Uterus (tissue), 4 donors: ENCODE measurements at regions of chr1 and their contacts with region 1.

Region 1: GRCh38 chr1:36285448-36286101 is 20.6 kb upstream of the SH3D21 start:
- DNase-seq: peak; percentile 49 to 80
- H3K4me3 ChIP-seq: no peak overlapping the region
- H3K27ac ChIP-seq: peak overlapping the region in 1 of 2 donors; percentile 19
- H3K4me1 ChIP-seq: no peaks in the 10 kb centered on the region
- H3K27me3 ChIP-seq: no peaks in the 10 kb centered on the region
- CTCF ChIP-seq: peak; percentile 73 to 82 (median 78)
- POLR2A ChIP-seq: no peak

Region 2: GRCh38 chr1:36150296-36151132 is 135.1 kb before region 1 on chr1:
- intact Hi-C with region 1: loop called (anchors 10 kb)
- DNase-seq: peak; percentile 89 to 93
- H3K4me3 ChIP-seq: no peak overlapping the region
- H3K27ac ChIP-seq: peak overlapping the region; percentile 89 to 98
- H3K4me1 ChIP-seq: peaks cover 13 to 20% of the 10 kb centered on the region in 2 donors
- H3K27me3 ChIP-seq: no peaks in the 10 kb centered on the region
- CTCF ChIP-seq: no peak
- POLR2A ChIP-seq: peak; percentile 63 to 86

Region 3: DNA sequence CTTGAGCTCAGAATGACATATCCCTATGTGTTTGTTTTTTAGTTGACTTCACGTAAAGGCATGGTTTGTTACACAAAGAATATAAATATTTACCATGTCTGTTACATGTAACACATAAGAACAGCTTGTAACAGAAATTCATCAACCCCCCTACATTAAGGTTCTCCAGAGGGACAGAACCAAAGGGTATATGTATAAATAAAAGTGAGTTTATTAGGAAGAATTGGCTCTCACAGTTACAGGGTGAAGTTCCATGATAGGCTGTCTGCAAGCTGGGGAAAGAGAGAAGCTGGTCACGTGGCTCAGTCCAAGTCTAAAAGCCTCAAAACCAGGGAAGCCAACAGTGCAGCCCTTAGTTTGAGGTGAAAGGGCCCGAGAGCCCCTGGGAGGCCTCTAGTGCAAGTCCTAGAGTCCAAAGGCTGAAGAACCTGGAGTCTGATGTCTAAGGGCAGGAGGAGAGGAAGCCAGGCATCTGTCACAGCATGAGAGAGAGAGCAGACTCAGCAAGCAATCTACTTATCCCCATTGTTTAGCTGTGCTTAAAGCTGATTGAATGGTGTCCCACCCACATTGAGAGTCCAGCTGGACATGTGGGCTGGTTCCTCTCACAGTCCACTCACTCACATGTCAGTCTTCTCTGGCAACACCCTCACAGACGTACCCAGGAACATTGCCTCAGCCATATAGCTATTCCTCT is 45.5 kb before region 1 on chr1:
- intact Hi-C with region 1: loop called (anchors 10 kb)
- DNase-seq: no peak
- H3K4me3 ChIP-seq: no peak overlapping the region
- H3K27ac ChIP-seq: no peak overlapping the region
- H3K4me1 ChIP-seq: no peaks in the 10 kb centered on the region
- H3K27me3 ChIP-seq: no peaks in the 10 kb centered on the region
- CTCF ChIP-seq: no peak
- POLR2A ChIP-seq: no peak

Region 4: DNA sequence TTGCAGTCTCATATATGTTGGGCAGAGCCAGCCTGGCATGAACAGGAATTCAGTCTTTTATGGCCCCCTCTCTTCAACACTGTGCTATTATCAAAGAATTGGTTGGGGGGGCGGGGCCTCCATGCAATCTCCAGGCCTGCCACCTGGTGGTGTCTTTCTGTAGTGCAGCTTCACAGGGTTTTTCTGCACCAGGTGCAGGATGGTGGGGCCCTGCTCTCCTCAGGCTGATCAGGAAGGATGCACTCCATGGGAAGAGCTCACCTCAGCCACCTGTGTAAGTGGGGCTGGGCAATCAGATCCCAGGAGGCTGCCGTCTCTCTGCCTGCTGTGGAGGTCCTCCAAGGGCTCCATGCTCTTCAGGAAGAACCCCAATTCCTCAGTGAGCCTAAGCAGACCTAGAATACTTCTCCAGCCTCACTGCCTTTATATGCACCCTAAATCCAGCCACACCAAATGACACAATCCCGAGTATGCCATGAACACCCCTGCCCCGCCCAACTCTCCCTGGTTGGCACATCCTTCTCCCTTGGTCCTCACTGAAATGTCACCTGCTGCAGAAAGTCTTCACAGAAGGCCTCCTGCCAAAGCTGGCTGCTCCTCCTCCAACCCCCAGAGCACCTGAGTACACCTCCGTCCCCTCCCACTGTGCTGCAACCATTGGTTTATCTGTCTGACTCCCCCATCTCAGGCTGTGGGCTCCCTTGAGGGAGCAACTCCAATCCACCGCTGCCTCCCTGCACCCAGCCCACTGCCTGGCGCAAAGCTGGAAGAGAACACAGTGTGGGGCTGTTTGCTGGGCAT is 83.7 kb after region 1 on chr1:
- intact Hi-C with region 1: no loop called
- DNase-seq: peak; percentile 71 to 76
- H3K4me3 ChIP-seq: no peak overlapping the region
- H3K27ac ChIP-seq: peak overlapping the region in 1 of 2 donors; percentile 5
- H3K4me1 ChIP-seq: peaks cover 14 to 22% of the 10 kb centered on the region in 2 donors
- H3K27me3 ChIP-seq: no peaks in the 10 kb centered on the region
- CTCF ChIP-seq: peak; percentile 85 to 89 (median 86)
- POLR2A ChIP-seq: peak in 1 of 2 donors; percentile 11